ENCODE measurements at regions of chr1 and their contacts with region 1.

Region 1: GRCh38 chr1:86499987-86500593 is 31.4 kb downstream of the CLCA1 start:
- DNase-seq: peak in 3 of 14 experiments; percentile 55 to 79 (median 57)
- ATAC-seq: peak; percentile 61
- H3K4me3 ChIP-seq: no peak overlapping the region
- H3K4me3 Mint-ChIP-seq: no peak overlapping the region
- H3K27ac ChIP-seq: no peak overlapping the region
- H3K27ac Mint-ChIP-seq: no peak overlapping the region
- H3K4me1 ChIP-seq: peaks cover 7% of the 10 kb centered on the region
- H3K4me1 Mint-ChIP-seq: peaks cover 17% of the 10 kb centered on the region
- H3K27me3 ChIP-seq: peaks cover 0 to 3% of the 10 kb centered on the region in 2 experiments
- H3K27me3 Mint-ChIP-seq: peaks cover 23% of the 10 kb centered on the region
- CTCF ChIP-seq: peak; percentile 100

Region 2: GRCh38 chr1:85746777-85747176 is 753.3 kb before region 1 on chr1:
- CTCF ChIA-PET with region 1: no interaction called
- POLR2A ChIA-PET with region 1: no interaction called
- intact Hi-C with region 1: no loop called
- DNase-seq: no peak
- ATAC-seq: no peak
- H3K4me3 ChIP-seq: no peak overlapping the region
- H3K4me3 Mint-ChIP-seq: no peak overlapping the region
- H3K27ac ChIP-seq: no peak overlapping the region
- H3K27ac Mint-ChIP-seq: no peak overlapping the region
- H3K4me1 ChIP-seq: no peaks in the 10 kb centered on the region
- H3K4me1 Mint-ChIP-seq: no peaks in the 10 kb centered on the region
- H3K27me3 ChIP-seq: no peaks in the 10 kb centered on the region
- H3K27me3 Mint-ChIP-seq: peaks cover 9% of the 10 kb centered on the region
- CTCF ChIP-seq: no peak

Region 3: GRCh38 chr1:86419277-86419903 is 80.7 kb before region 1 on chr1:
- CTCF ChIA-PET with region 1: interaction called, 4 read pairs
- POLR2A ChIA-PET with region 1: no interaction called
- intact Hi-C with region 1: loop called (anchors 2 to 5 kb)
- DNase-seq: peak in 13 of 14 experiments; percentile 5 to 73 (median 25)
- ATAC-seq: peak; percentile 98
- H3K4me3 ChIP-seq: no peak overlapping the region
- H3K4me3 Mint-ChIP-seq: peak overlapping the region; percentile 26
- H3K27ac ChIP-seq: no peak overlapping the region
- H3K27ac Mint-ChIP-seq: no peak overlapping the region
- H3K4me1 ChIP-seq: peaks cover 3% of the 10 kb centered on the region
- H3K4me1 Mint-ChIP-seq: peaks cover 5% of the 10 kb centered on the region
- H3K27me3 ChIP-seq: no peaks in the 10 kb centered on the region
- H3K27me3 Mint-ChIP-seq: no peaks in the 10 kb centered on the region
- CTCF ChIP-seq: peak; percentile 69

Region 4: DNA sequence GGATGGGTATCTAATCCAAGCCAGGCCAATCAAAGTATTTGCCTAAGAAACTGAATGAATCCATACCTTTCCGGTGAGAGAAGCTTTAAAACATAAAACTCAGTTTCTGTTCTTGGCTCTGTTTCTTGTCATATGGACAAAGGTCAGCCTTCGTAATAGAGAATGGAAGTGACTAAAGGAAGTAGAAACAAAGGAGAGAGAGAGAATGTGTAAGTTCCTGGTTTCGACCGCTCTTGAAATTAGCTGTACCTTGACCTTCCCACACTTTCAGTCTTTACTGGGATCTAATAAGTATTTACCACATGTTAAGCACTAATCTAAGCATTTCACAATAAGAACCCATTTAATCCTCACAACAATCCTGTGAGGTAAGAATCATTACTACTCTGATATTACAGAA is 27.2 kb after region 1 on chr1:
- CTCF ChIA-PET with region 1: no interaction called
- POLR2A ChIA-PET with region 1: no interaction called
- intact Hi-C with region 1: no loop called
- DNase-seq: no peak
- ATAC-seq: no peak
- H3K4me3 ChIP-seq: no peak overlapping the region
- H3K4me3 Mint-ChIP-seq: no peak overlapping the region
- H3K27ac ChIP-seq: no peak overlapping the region
- H3K27ac Mint-ChIP-seq: no peak overlapping the region
- H3K4me1 ChIP-seq: no peaks in the 10 kb centered on the region
- H3K4me1 Mint-ChIP-seq: no peaks in the 10 kb centered on the region
- H3K27me3 ChIP-seq: no peaks in the 10 kb centered on the region
- H3K27me3 Mint-ChIP-seq: peaks cover 4% of the 10 kb centered on the region
- CTCF ChIP-seq: no peak

Measured in CD4-positive, alpha-beta T cell (primary cell).